Activated B cell treated with CpG ODN at 0.5 μM for 24 hours (primary cell): ENCODE measurements at regions of chr2 and their contacts with region 1.

Region 1: GRCh38 chr2:68467077-68467960 is at the starts of genes APLF and FBXO48:
- DNase-seq: peak; percentile 96
- ATAC-seq: peak; percentile 94
- H3K4me3 Mint-ChIP-seq: peak within 1 kb of the TSS; percentile 98
- H3K27ac Mint-ChIP-seq: peak within 1 kb of the TSS; percentile 93
- H3K4me1 Mint-ChIP-seq: peaks cover 29% of the 10 kb centered on the region
- H3K27me3 Mint-ChIP-seq: no peaks in the 10 kb centered on the region
- CTCF ChIP-seq: no peak
- total RNA-seq, gene APLF: 6.4 and 6.8 TPM in 2 replicates
- total RNA-seq, gene FBXO48: 1.8 and 2.6 TPM in 2 replicates

Region 2: DNA sequence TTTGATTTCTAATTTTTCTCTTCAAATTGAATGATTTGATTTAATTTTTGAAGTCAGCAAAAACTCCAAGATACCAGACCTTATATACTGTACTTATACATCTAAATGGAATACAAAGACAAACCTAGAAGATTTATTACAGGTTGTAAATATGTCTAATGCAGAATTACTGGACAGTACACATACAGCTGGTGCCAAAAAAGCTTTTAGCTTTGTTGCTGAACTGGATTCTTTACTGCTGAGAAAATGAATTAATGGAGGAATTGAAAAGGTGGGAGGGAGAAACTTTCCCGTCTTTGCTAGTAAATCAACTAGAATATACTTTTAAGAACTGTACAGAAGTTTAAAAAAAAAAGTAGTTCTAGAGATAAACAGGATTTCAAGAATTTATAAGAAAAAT is 422.0 kb before region 1 on chr2:
- CTCF ChIA-PET with region 1: no interaction called
- POLR2A ChIA-PET with region 1: no interaction called
- intact Hi-C with region 1: no loop called
- DNase-seq: no peak
- ATAC-seq: no peak
- H3K4me3 Mint-ChIP-seq: no peak overlapping the region
- H3K27ac Mint-ChIP-seq: no peak overlapping the region
- H3K4me1 Mint-ChIP-seq: peaks cover 8% of the 10 kb centered on the region
- H3K27me3 Mint-ChIP-seq: no peaks in the 10 kb centered on the region
- CTCF ChIP-seq: no peak

Region 3: GRCh38 chr2:68157402-68158133 is 309.8 kb before region 1 on chr2 and contains the start of gene PNO1:
- CTCF ChIA-PET with region 1: no interaction called
- POLR2A ChIA-PET with region 1: interaction called, 4 read pairs
- intact Hi-C with region 1: loop called (anchors 1 kb)
- DNase-seq: peak; percentile 94
- ATAC-seq: peak; percentile 95
- H3K4me3 Mint-ChIP-seq: peak within 1 kb of the TSS; percentile 99
- H3K27ac Mint-ChIP-seq: peak within 1 kb of the TSS; percentile 100
- H3K4me1 Mint-ChIP-seq: peaks cover 55% of the 10 kb centered on the region
- H3K27me3 Mint-ChIP-seq: no peaks in the 10 kb centered on the region
- CTCF ChIP-seq: no peak
- total RNA-seq, gene PNO1: 22.1 and 24.9 TPM in 2 replicates

Region 4: DNA sequence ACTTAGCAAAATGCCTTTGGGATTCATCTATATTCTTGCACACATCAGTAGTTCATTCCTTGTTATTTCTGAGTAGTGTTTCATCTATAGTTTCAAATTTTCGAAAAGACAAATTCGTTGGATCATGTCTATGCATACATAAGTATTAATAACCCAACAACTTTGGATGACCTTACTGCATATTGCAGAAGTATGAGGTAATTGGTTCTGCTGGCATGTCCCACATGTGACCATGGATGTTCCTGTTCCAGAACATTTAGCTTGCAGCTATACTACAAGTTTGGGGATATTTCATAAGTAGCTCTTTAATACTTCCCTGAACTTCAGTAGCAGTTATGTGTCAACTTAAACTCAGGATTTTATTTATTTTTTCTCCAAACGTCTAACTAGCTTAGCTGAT is 45.0 kb after region 1 on chr2:
- CTCF ChIA-PET with region 1: no interaction called
- POLR2A ChIA-PET with region 1: no interaction called
- intact Hi-C with region 1: no loop called
- DNase-seq: no peak
- ATAC-seq: no peak
- H3K4me3 Mint-ChIP-seq: no peak overlapping the region
- H3K27ac Mint-ChIP-seq: no peak overlapping the region
- H3K4me1 Mint-ChIP-seq: no peaks in the 10 kb centered on the region
- H3K27me3 Mint-ChIP-seq: no peaks in the 10 kb centered on the region
- CTCF ChIP-seq: no peak

Region 5: DNA sequence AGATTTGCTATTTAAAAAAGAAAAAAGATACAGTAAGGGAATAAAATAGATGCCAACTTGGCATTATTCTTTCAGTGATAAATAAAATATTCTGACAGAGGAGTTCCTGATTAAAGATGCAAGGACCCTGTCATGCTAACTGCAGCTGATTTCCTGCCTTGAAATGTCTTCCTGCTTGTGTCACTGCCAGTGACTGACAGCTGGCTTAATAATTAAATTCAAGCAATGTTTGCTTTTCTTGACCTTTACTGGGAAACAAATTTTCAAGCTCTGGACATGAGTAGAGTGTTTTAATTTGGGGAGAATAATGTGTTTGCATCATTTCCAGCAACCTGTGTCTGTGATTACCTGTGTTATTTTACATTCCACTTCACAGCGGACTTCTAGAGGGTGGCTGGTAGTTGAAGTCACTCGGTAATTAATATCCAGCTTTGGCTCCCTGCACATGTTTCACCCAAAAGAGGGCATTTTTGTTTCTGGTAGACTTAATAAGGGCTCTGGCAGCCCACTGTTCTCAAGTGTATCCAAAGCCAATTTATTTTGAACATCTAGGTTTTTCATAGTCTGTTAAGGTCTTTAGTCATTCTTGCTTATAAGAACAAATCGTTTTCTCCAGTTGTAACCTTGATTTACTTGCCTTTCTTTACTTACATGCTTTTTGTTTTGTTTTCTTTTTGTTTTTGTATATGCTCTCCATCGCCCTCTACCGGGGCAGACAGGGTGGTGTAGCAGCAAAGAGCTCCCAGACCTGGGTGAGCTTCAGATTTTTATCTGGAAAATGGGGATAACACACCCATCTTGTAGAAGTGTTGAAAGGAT is 127.6 kb after region 1 on chr2:
- CTCF ChIA-PET with region 1: interaction called, 32 read pairs
- POLR2A ChIA-PET with region 1: no interaction called
- intact Hi-C with region 1: loop called (anchors 1 kb)
- DNase-seq: peak; percentile 21
- ATAC-seq: peak; percentile 52
- H3K4me3 Mint-ChIP-seq: peak overlapping the region; percentile 0
- H3K27ac Mint-ChIP-seq: no peak overlapping the region
- H3K4me1 Mint-ChIP-seq: peaks cover 12% of the 10 kb centered on the region
- H3K27me3 Mint-ChIP-seq: peaks cover 5% of the 10 kb centered on the region
- CTCF ChIP-seq: peak; percentile 64

Region 6: DNA sequence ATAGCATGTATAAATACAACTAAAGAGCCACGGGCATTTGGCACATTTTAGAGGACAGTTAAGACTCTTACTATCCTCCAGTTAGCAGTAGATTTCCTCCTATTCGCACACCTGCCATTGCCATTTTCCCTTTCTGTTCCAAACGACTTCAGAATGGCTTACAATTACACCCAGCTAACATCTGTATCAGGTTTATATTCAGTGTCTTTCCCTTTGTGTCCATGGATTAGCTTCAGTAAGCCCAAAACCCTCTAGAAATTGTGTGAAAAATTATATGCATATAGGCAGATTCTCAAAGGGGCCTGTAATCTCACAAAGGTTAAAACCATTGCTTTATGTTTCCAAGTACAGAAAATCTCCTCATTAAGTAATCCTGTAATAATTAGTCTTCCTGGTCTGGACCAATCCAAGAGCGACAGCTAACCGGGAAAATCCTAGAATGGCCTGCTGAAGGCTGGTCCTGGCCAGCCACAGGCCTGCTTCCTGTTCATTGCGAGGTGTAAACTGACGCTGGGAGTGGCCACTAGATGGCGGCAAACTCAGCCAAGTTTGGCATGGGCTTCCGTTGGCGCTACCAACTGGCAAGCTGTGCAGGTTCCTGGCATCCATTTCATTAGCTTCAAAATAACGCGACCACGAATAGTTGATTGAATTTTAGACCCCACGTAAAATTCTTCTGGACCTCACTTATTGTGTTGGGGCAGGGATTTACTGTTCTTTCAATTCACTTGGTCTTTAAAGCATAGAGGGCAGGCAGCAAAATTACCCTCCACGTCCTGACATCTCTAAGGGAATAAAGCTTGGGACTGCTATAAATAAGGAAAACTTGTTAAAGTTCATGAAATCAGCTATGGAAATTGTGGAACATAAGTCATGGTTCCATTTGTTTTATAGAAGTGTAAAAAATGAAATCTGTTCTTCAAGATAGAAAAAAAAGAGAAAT is 284.3 kb after region 1 on chr2:
- CTCF ChIA-PET with region 1: interaction called, 10 read pairs
- POLR2A ChIA-PET with region 1: interaction called, 3 read pairs
- intact Hi-C with region 1: loop called (anchors 1 kb)
- DNase-seq: peak; percentile 79
- ATAC-seq: peak; percentile 92
- H3K4me3 Mint-ChIP-seq: peak overlapping the region; percentile 62
- H3K27ac Mint-ChIP-seq: peak overlapping the region; percentile 92
- H3K4me1 Mint-ChIP-seq: peaks cover 83% of the 10 kb centered on the region
- H3K27me3 Mint-ChIP-seq: no peaks in the 10 kb centered on the region
- CTCF ChIP-seq: peak; percentile 67

Region 7: DNA sequence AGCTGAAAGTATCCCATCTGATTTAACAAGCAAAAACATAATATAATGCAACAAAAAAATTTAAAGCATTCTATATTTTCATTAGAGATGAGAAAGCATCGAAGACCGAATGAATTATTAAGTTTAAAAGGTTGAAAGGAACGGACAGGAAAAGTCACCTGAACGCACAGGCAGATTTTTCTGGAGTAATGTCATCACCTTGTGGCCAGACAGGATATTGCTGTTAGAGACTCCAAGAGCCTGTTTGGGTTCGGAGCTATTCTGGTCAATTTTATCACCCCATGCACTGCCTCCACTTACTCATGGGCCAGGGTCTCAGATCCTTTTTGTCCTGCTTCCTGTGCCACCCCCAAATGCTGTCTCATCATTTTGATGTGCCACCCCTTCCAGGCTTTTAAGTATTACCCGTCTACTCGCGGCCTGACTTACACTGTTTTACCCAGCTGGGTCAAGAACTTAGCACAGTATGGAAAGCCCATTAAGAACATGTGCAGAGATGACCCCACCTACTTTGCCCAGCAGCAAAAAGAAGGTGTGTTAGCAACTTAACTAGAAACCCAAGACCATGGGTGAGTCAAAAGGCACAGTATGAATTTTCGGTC is 458.1 kb after region 1 on chr2:
- CTCF ChIA-PET with region 1: interaction called, 165 read pairs
- POLR2A ChIA-PET with region 1: interaction called, 8 read pairs
- intact Hi-C with region 1: loop called (anchors 1 kb)
- DNase-seq: no peak
- ATAC-seq: peak; percentile 83
- H3K4me3 Mint-ChIP-seq: no peak overlapping the region
- H3K27ac Mint-ChIP-seq: no peak overlapping the region
- H3K4me1 Mint-ChIP-seq: peaks cover 3% of the 10 kb centered on the region
- H3K27me3 Mint-ChIP-seq: no peaks in the 10 kb centered on the region
- CTCF ChIP-seq: no peak

Region 8: GRCh38 chr2:69565431-69565839 is 1098.1 kb after region 1 on chr2:
- CTCF ChIA-PET with region 1: interaction called, 12 read pairs
- POLR2A ChIA-PET with region 1: no interaction called
- intact Hi-C with region 1: no loop called
- DNase-seq: peak; percentile 43
- ATAC-seq: peak; percentile 52
- H3K4me3 Mint-ChIP-seq: no peak overlapping the region
- H3K27ac Mint-ChIP-seq: no peak overlapping the region
- H3K4me1 Mint-ChIP-seq: no peaks in the 10 kb centered on the region
- H3K27me3 Mint-ChIP-seq: peaks cover 20% of the 10 kb centered on the region
- CTCF ChIP-seq: peak; percentile 25